Naive thymus-derived CD4-positive, alpha-beta T cell (primary cell): ENCODE measurements at regions of chr4 and their contacts with region 1.

Region 1: DNA sequence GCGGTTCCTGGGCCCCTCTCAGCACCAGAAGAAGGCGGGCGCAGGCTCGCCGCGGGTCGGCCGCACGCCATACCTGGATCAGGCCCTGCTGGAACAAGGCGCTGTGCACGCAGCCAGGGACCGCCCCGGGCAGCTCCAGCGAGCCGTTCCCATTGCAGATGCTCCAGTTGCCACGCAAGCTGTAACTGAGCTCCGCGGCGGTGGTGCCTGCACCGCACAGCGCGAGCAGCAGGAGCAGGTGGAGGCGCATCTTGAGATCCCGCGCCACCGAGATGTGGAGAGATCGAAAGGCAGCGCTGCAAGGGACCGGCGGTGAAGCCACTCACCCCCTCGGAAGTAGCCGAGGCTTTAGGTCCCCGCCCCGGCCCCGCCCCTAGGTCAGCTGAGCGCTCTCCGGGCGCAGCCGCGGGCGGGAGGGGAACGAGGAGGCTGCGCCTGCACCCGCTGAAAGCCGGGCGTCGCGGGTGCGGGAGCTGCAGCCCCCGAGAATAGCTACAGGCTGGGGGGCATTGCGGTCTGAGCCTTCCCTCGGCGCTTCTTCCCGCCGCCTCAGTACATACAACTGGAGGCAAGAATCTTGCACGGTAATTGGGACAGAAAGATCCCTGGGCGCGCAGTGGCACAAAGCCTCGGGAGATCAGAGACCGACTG is at the start of gene MANBA:
- DNase-seq: peak; percentile 62 to 81 (median 73)
- ATAC-seq: peak; percentile 91
- H3K4me3 ChIP-seq: peak within 1 kb of the TSS; percentile 62
- H3K4me3 Mint-ChIP-seq: peak within 1 kb of the TSS; percentile 86 to 99 (median 98)
- H3K27ac ChIP-seq: peak within 1 kb of the TSS; percentile 72
- H3K27ac Mint-ChIP-seq: peak within 1 kb of the TSS; percentile 56 to 92 (median 84)
- H3K4me1 ChIP-seq: peaks cover 4 to 16% of the 10 kb centered on the region in 2 donors
- H3K4me1 Mint-ChIP-seq: peaks cover 35 to 50% (median 42%) of the 10 kb centered on the region in 7 donors
- H3K27me3 ChIP-seq: no peaks in the 10 kb centered on the region
- H3K27me3 Mint-ChIP-seq: peaks cover 0 to 13% (median 0%) of the 10 kb centered on the region in 5 donors
- total RNA-seq, gene MANBA: 15.7 to 56.4 (median 29.7) TPM

Region 2: DNA sequence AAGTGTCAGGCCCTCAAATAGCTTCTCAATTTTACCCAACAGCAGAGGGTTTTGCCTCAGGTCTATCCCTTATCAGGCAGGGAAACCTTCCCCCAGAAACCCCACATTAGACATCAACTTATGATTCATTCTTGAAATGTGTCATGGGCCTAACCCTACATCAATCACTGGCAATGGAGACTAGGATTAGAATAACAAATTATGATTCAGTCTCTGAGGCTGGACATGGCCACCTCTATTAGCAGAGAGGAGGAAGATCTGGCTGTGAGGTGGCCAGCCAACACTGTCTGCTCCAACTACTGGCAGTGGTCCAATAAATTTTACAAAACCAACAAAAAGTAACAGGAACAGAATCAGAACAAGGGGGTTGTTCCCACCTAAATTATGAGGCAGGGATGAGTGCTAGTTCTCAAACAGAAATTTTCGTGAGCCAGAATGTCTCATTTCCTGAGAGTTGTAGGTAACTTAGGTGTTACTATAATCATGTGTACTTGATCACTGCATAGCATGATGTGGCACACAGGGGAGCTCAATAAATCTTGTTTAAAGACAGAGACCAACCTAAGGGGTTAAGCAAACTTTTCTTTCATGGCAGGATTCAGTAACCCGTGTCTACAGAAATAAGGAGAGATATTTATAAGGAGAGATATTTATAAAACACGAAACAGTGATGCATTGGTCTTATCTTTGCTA is 132.8 kb before region 1 on chr4:
- CTCF ChIA-PET with region 1: no interaction called
- POLR2A ChIA-PET with region 1: interaction called, 3 read pairs
- intact Hi-C with region 1: loop called in 1 of 2 experiments (anchors 1 kb)
- DNase-seq: no peak
- ATAC-seq: no peak
- H3K4me3 ChIP-seq: no peak overlapping the region
- H3K4me3 Mint-ChIP-seq: peak overlapping the region in 4 of 10 donors; percentile 16 to 92 (median 58)
- H3K27ac ChIP-seq: no peak overlapping the region
- H3K27ac Mint-ChIP-seq: peak overlapping the region in 7 of 9 donors; percentile 15 to 100 (median 87)
- H3K4me1 ChIP-seq: peaks cover 29 to 42% of the 10 kb centered on the region in 2 donors
- H3K4me1 Mint-ChIP-seq: peaks cover 29 to 91% (median 65%) of the 10 kb centered on the region in 7 donors
- H3K27me3 ChIP-seq: no peaks in the 10 kb centered on the region
- H3K27me3 Mint-ChIP-seq: no peaks in the 10 kb centered on the region

Region 3: GRCh38 chr4:102736636-102737549 is 23.9 kb before region 1 on chr4:
- CTCF ChIA-PET with region 1: no interaction called
- POLR2A ChIA-PET with region 1: interaction called, 3 read pairs
- intact Hi-C with region 1: loop called in 1 of 2 experiments (anchors 2 kb)
- DNase-seq: no peak
- ATAC-seq: no peak
- H3K4me3 ChIP-seq: no peak overlapping the region
- H3K4me3 Mint-ChIP-seq: no peak overlapping the region
- H3K27ac ChIP-seq: no peak overlapping the region
- H3K27ac Mint-ChIP-seq: peak overlapping the region in 1 of 9 donors; percentile 18
- H3K4me1 ChIP-seq: no peaks in the 10 kb centered on the region
- H3K4me1 Mint-ChIP-seq: peaks cover 16 to 58% (median 38%) of the 10 kb centered on the region in 7 donors
- H3K27me3 ChIP-seq: no peaks in the 10 kb centered on the region
- H3K27me3 Mint-ChIP-seq: no peaks in the 10 kb centered on the region

Region 4: GRCh38 chr4:102868781-102869568 is 108.2 kb after region 1 on chr4 and contains the start of gene CISD2:
- CTCF ChIA-PET with region 1: no interaction called
- POLR2A ChIA-PET with region 1: interaction called, 17 read pairs
- intact Hi-C with region 1: loop called (anchors 1 kb)
- DNase-seq: peak; percentile 87 to 95 (median 92)
- ATAC-seq: peak; percentile 90
- H3K4me3 ChIP-seq: peak within 1 kb of the TSS; percentile 95
- H3K4me3 Mint-ChIP-seq: peak within 1 kb of the TSS; percentile 88 to 100 (median 96)
- H3K27ac ChIP-seq: peak within 1 kb of the TSS; percentile 99
- H3K27ac Mint-ChIP-seq: peak within 1 kb of the TSS; percentile 98 to 100 (median 99)
- H3K4me1 ChIP-seq: peaks cover 16 to 28% of the 10 kb centered on the region in 2 donors
- H3K4me1 Mint-ChIP-seq: peaks cover 32 to 80% (median 71%) of the 10 kb centered on the region in 7 donors
- H3K27me3 ChIP-seq: no peaks in the 10 kb centered on the region
- H3K27me3 Mint-ChIP-seq: no peaks in the 10 kb centered on the region
- total RNA-seq, gene CISD2: 11.4 to 50.3 (median 13.4) TPM

Region 5: DNA sequence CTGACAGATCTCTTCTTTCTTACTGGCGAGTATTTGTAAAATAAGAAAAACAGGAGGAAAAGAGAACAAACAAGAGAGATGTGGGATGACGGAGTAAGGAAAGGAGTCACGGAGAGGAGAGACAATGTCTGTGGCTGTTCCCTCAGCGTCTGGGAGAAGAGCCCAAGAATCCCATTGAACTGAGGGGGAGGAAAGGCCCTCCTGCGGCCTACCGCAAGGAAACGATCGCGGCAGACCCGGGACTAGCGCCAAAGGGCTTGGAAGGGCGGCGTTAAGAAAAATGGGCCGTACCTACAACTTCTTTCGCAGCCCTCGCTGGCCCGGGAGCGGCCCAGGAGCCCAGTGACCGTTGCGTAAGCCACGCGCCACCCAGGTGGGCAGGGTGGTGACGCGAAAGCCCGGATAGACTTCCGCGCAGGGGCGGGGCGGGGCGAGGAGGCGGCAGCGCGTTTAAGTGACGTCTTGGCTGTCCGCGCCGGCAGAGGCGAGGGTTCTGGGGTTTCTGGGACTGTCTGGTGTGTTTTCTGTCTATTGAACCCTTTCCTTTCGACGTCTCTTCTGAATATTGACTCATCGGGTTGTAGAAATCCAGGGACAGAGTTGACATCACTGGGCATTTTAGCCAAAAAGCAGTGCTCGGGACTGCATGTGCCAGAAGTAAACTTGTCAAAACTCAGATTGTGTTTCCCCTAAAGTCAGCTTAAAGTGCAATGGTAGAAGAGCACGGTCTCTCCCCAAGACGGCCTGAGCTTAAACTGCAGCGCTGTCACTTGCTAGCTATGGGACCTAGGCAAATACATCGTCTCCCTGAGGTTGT is 258.7 kb after region 1 on chr4 and contains the start of gene SLC9B1:
- CTCF ChIA-PET with region 1: no interaction called
- POLR2A ChIA-PET with region 1: interaction called, 3 read pairs
- intact Hi-C with region 1: loop called (anchors 1 kb)
- DNase-seq: peak; percentile 87 to 95 (median 92)
- ATAC-seq: peak; percentile 98
- H3K4me3 ChIP-seq: peak within 1 kb of the TSS; percentile 48
- H3K4me3 Mint-ChIP-seq: peak within 1 kb of the TSS; percentile 84 to 98 (median 93)
- H3K27ac ChIP-seq: peak within 1 kb of the TSS; percentile 80
- H3K27ac Mint-ChIP-seq: peak within 1 kb of the TSS in 6 of 9 donors; percentile 96 to 99 (median 98)
- H3K4me1 ChIP-seq: peaks cover 13 to 14% of the 10 kb centered on the region in 2 donors
- H3K4me1 Mint-ChIP-seq: peaks cover 0 to 29% (median 20%) of the 10 kb centered on the region in 7 donors
- H3K27me3 ChIP-seq: no peaks in the 10 kb centered on the region
- H3K27me3 Mint-ChIP-seq: no peaks in the 10 kb centered on the region
- total RNA-seq, gene SLC9B1: 1.4 to 7.2 (median 3.9) TPM

Region 6: GRCh38 chr4:103198111-103198765 is 437.5 kb after region 1 on chr4 and contains the start of gene CENPE:
- CTCF ChIA-PET with region 1: no interaction called
- POLR2A ChIA-PET with region 1: no interaction called
- intact Hi-C with region 1: loop called in 1 of 2 experiments (anchors 5 kb)
- DNase-seq: peak; percentile 77 to 90 (median 87)
- ATAC-seq: peak; percentile 93
- H3K4me3 ChIP-seq: peak within 1 kb of the TSS; percentile 95
- H3K4me3 Mint-ChIP-seq: peak within 1 kb of the TSS; percentile 81 to 99 (median 96)
- H3K27ac ChIP-seq: peak within 1 kb of the TSS; percentile 91
- H3K27ac Mint-ChIP-seq: peak within 1 kb of the TSS; percentile 87 to 100 (median 99)
- H3K4me1 ChIP-seq: peaks cover 0 to 6% of the 10 kb centered on the region in 2 donors
- H3K4me1 Mint-ChIP-seq: peaks cover 6 to 29% (median 10%) of the 10 kb centered on the region in 7 donors
- H3K27me3 ChIP-seq: no peaks in the 10 kb centered on the region
- H3K27me3 Mint-ChIP-seq: peaks cover 0 to 21% (median 7%) of the 10 kb centered on the region in 5 donors
- total RNA-seq, gene CENPE: 1.1 to 35.8 (median 1.5) TPM